Endothelial cell of umbilical vein (primary cell): ENCODE measurements at regions of chr9 and their contacts with region 1.

Region 1: DNA sequence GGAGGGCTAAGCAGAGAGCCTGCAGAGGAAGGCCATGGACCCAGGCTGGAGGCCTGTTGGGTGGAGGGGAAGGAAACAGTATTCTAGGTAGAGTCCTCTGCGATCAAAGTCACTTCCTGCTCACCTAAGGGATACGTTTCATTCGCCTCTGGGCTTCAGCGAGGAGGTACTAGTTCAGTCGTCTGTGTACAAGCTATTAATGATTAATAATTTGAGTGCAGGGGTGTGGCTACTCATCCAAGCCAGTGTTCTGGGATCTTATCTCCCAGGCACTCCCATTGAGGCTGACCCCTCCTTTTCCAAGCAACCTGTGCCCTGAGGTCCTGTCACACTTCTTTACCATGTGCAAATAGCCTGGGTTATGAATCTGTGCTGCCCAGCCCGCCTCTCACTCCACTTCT is 25.2 kb downstream of the RALGPS1 start:
- DNase-seq: no peak
- H3K4me3 ChIP-seq: no peak overlapping the region
- H3K27ac ChIP-seq: no peak overlapping the region
- H3K4me1 ChIP-seq: no peaks in the 10 kb centered on the region
- H3K27me3 ChIP-seq: peaks cover under 1 to 6% of the 10 kb centered on the region in 2 experiments
- CTCF ChIP-seq: no peak
- POLR2A ChIP-seq: no peak

Region 2: DNA sequence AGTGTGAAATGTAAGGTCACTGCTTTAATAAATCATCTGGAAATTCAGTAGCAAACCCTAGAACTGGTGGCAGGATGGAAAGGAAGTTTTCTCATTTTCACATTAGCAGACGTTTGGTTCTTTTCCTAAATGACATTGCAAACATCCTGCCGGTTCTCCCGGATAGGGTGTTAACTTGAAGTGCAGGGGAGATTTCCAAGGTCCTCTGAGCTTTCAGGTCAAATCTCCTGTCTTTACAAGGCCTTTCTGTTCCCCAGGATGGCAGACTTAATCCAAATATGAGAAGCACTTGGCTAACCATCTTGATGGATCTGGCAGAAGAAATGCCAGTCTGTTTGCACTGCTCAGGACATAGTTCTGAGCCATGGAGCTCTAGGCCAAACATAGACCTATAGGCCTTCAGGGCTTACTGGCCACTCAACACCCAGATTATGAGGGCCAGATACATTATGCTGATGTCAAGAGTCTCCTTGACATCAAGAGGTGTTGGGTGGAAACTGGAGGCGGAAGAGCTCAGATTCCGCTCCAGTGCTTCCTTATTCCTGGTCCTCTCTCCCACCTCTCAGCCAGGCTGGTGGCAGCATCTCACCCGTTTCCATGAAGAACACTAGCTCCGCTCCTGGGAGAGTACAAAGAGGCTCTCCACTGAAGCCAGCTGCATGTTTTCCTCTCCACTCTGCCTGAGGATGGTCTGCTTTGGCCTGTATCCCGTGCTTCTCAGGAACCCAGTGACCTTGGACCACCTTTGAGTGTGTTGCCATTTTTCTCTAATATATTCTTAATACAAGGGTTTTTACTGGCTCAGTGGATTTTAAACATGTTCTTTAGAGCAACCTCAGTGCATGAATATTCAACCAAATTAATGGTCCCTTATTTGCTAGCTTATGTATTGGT is 35.8 kb after region 1 on chr9:
- CTCF ChIA-PET with region 1: interaction called, 11 read pairs
- POLR2A ChIA-PET with region 1: no interaction called
- dilution Hi-C with region 1: no loop called
- intact Hi-C with region 1: no loop called
- DNase-seq: no peak
- H3K4me3 ChIP-seq: no peak overlapping the region
- H3K27ac ChIP-seq: no peak overlapping the region
- H3K4me1 ChIP-seq: peaks cover 14% of the 10 kb centered on the region
- H3K27me3 ChIP-seq: no peaks in the 10 kb centered on the region
- CTCF ChIP-seq: no peak
- POLR2A ChIP-seq: no peak

Region 3: GRCh38 chr9:127199001-127199791 is 259.4 kb after region 1 on chr9:
- CTCF ChIA-PET with region 1: interaction called, 272 read pairs
- POLR2A ChIA-PET with region 1: no interaction called
- dilution Hi-C with region 1: no loop called
- intact Hi-C with region 1: loop called (anchors 1 kb)
- DNase-seq: peak; percentile 81
- H3K4me3 ChIP-seq: no peak overlapping the region
- H3K27ac ChIP-seq: no peak overlapping the region
- H3K4me1 ChIP-seq: no peaks in the 10 kb centered on the region
- H3K27me3 ChIP-seq: no peaks in the 10 kb centered on the region
- CTCF ChIP-seq: peak; percentile 82 to 89
- POLR2A ChIP-seq: no peak

Region 4: DNA sequence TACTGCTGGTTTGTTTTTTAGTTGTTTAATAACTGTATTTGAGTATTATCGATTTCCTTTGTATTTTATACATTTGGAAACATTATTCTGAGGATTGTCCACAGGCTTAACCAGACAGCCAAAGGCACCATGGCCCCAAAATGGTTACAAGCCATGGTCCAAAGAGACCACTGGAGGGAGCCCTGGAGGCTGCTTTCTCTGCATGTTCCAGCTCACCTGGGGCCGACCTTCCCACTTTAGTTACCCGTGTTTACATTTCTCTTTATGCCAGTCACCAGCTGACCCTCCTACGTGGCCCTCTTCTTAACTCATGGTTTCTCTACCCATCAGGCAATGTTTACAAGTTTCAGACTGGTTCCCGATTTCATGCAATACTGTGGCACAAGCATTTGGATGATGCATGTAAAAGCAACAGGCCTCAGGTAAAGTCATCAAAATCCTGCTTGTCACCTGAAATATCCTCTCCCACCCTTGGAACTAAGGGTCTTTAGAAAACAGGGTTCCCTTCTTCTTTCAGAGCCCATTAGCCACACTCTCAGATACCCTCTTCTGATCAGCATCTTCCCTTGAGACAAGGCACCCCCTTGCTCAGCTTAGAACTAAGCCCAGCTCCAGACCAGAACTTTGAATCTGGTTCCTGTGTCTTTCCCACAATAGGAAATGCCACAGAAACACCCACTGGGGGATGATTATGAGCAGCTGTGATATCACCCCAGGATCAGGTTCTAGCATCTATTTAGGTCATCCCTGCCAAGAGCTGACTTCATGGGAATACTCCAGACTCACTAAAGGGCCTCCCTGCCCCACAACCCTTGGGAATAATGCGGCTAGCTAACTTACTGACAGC is 274.8 kb after region 1 on chr9:
- CTCF ChIA-PET with region 1: interaction called, 71 read pairs
- POLR2A ChIA-PET with region 1: no interaction called
- dilution Hi-C with region 1: no loop called
- intact Hi-C with region 1: no loop called
- DNase-seq: peak; percentile 52
- H3K4me3 ChIP-seq: no peak overlapping the region
- H3K27ac ChIP-seq: no peak overlapping the region
- H3K4me1 ChIP-seq: no peaks in the 10 kb centered on the region
- H3K27me3 ChIP-seq: peaks cover 0 to 5% of the 10 kb centered on the region in 2 experiments
- CTCF ChIP-seq: peak; percentile 79 to 91
- POLR2A ChIP-seq: no peak

Region 5: GRCh38 chr9:127396808-127397497 is 457.1 kb after region 1 on chr9 and contains the start of gene SLC2A8:
- CTCF ChIA-PET with region 1: interaction called, 19 read pairs
- POLR2A ChIA-PET with region 1: no interaction called
- dilution Hi-C with region 1: no loop called
- intact Hi-C with region 1: loop called (anchors 1 kb)
- DNase-seq: peak; percentile 100
- H3K4me3 ChIP-seq: peak within 1 kb of the TSS; percentile 42 to 85 (median 60)
- H3K27ac ChIP-seq: peak within 1 kb of the TSS; percentile 5
- H3K4me1 ChIP-seq: peaks cover 9% of the 10 kb centered on the region
- H3K27me3 ChIP-seq: peaks cover 2 to 4% of the 10 kb centered on the region in 2 experiments
- CTCF ChIP-seq: no peak
- POLR2A ChIP-seq: peak; percentile 62
- total RNA-seq, gene SLC2A8: 17.0 and 19.3 TPM in 2 replicates